Cardiac septum (tissue), 1 donor: ENCODE measurements at regions of chr14 and their contacts with region 1.

Region 1: DNA sequence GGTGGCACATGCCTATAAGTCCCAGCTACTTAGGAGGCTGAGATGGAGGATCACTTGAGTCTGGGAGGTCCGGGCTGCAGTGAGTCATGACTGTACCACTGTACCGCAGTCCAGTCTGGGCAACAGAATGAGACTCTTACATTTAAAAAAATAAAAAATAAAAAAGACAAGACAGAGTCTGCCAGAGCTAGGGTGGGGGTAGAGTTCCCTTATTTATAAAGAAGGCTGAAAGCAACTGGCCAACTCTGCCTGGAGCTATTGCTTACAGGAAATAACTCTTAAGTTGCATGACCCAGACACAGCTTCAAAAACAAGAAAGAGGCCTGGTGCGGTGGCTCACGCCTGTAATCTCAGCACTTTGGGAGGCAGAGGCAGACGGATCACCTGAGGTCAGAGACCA is 31.5 kb downstream of the NUMB start:
- DNase-seq: no peak

Region 2: DNA sequence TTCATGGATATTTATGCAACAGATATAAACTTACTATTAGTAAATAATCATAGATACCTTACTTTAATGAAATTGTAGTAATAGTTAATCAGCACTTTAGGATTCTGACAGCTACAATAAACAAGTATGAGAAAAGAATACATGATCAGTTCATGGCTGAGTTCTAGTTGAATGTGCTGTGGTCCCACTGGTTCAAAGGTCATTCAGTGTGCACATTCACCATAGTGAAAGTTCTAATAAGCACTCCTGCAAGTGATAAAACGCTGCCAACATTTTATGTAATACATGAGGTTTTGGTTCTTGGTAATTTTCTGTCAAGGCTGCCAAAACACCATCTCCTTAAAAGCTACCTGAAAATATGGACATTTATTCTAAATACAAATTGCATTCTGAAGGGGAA is 61.1 kb before region 1 on chr14:
- intact Hi-C with region 1: no loop called
- DNase-seq: no peak

Region 3: GRCh38 chr14:73463411-73463810 is 36.5 kb after region 1 on chr14:
- intact Hi-C with region 1: loop called (anchors 5 kb)
- DNase-seq: peak; percentile 83

Region 4: DNA sequence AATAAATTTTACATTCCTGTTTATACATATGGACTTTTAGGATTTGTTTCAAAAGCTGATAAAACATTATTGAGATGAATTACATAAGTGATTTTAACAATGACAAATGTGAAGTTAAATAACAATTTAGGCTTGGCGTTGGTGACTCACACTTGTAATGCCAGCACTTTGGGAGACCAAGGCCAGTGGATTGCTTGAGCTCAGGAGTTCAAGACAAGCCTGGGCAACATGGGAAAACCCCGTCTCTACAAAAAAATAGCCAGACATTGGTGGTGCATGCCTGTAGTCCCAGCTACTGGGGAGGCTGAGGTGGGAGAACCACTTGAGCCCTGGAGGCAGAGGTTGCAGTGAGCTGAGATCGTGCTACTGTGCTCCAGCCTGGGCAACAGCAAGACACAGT is 149.5 kb after region 1 on chr14:
- intact Hi-C with region 1: no loop called
- DNase-seq: no peak

Region 5: GRCh38 chr14:73878436-73878835 is 451.6 kb after region 1 on chr14:
- intact Hi-C with region 1: no loop called
- DNase-seq: no peak